Mammary epithelial cell (primary cell): ENCODE measurements at regions of chr5 and their contacts with region 1.

Region 1: GRCh38 chr5:178279725-178280438 is 47.3 kb upstream of the PHYKPL start:
- DNase-seq: peak; percentile 51
- H3K4me3 ChIP-seq: no peak overlapping the region
- H3K27ac ChIP-seq: no peak overlapping the region
- H3K4me1 ChIP-seq: no peaks in the 10 kb centered on the region
- H3K27me3 ChIP-seq: no peaks in the 10 kb centered on the region
- CTCF ChIP-seq: peak; percentile 73 to 90

Region 2: GRCh38 chr5:178113199-178113787 is 166.6 kb before region 1 on chr5 and contains the start of gene N4BP3:
- CTCF ChIA-PET with region 1: no interaction called
- dilution Hi-C with region 1: no loop called
- in situ Hi-C with region 1: no loop called
- intact Hi-C with region 1: no loop called
- DNase-seq: peak; percentile 82
- H3K4me3 ChIP-seq: peak within 1 kb of the TSS; percentile 47 to 74 (median 66)
- H3K27ac ChIP-seq: no peak within 1 kb of the TSS
- H3K4me1 ChIP-seq: peaks cover 24% of the 10 kb centered on the region
- H3K27me3 ChIP-seq: no peaks in the 10 kb centered on the region
- CTCF ChIP-seq: no peak
- total RNA-seq, gene N4BP3: 0.67 to 2.2 TPM

Region 3: DNA sequence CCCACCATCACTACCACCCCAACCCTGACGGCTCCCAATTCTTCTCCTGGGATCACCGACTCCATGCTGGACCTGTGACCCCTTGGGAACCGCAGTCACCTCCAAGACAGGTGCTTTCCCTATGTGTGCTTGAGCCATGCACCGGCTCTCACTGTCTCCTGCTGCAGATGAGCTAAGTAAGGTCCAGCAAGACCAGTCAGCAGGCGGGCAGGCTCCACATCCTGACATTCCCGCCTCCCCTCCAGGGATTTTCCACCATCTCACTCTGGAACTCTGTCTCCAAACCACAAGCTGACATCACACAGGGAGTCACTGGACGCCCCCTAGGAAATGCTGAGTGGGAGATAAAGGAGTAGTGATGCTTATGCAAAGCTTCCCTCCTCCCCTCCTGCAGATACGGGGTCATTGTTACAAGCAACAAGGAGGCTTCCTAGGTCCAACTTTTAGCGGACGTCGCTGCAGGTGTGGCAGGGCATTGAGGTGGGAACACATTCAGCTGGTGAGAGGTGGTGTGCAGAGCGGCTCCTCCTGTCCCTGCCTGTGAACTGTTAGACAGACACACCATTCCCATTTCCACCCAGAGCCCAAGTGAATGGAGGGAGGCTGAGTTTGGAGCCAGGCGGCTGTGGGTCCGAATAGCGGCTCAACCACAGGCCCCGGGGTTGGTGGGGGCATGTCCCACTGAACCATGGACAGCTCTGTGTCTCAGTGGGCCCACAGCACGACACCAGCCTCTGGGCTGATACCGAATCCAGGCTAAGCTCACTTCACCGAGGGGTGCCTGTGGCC is 82.0 kb after region 1 on chr5:
- CTCF ChIA-PET with region 1: no interaction called
- dilution Hi-C with region 1: loop called (anchors 5 kb)
- in situ Hi-C with region 1: no loop called
- intact Hi-C with region 1: no loop called
- DNase-seq: no peak
- H3K4me3 ChIP-seq: no peak overlapping the region
- H3K27ac ChIP-seq: no peak overlapping the region
- H3K4me1 ChIP-seq: no peaks in the 10 kb centered on the region
- H3K27me3 ChIP-seq: no peaks in the 10 kb centered on the region
- CTCF ChIP-seq: no peak

Region 4: GRCh38 chr5:178590141-178590923 is 310.4 kb after region 1 on chr5 and contains the start of gene COL23A1:
- CTCF ChIA-PET with region 1: no interaction called
- dilution Hi-C with region 1: no loop called
- in situ Hi-C with region 1: loop called in 1 of 2 experiments (anchors 25 kb)
- intact Hi-C with region 1: loop called (anchors 1 kb)
- DNase-seq: peak; percentile 33
- H3K4me3 ChIP-seq: peak within 1 kb of the TSS; percentile 37 to 60 (median 49)
- H3K27ac ChIP-seq: no peak within 1 kb of the TSS
- H3K4me1 ChIP-seq: peaks cover 25% of the 10 kb centered on the region
- H3K27me3 ChIP-seq: no peaks in the 10 kb centered on the region
- CTCF ChIP-seq: peak; percentile 43 to 77
- total RNA-seq, gene COL23A1: 0.33 to 0.54 TPM

Region 5: GRCh38 chr5:178838695-178839685 is 559.1 kb after region 1 on chr5:
- CTCF ChIA-PET with region 1: no interaction called
- dilution Hi-C with region 1: no loop called
- in situ Hi-C with region 1: no loop called
- intact Hi-C with region 1: loop called (anchors 1 kb)
- DNase-seq: peak; percentile 46
- H3K4me3 ChIP-seq: no peak overlapping the region
- H3K27ac ChIP-seq: no peak overlapping the region
- H3K4me1 ChIP-seq: no peaks in the 10 kb centered on the region
- H3K27me3 ChIP-seq: no peaks in the 10 kb centered on the region
- CTCF ChIP-seq: peak; percentile 42 to 80

Region 6: DNA sequence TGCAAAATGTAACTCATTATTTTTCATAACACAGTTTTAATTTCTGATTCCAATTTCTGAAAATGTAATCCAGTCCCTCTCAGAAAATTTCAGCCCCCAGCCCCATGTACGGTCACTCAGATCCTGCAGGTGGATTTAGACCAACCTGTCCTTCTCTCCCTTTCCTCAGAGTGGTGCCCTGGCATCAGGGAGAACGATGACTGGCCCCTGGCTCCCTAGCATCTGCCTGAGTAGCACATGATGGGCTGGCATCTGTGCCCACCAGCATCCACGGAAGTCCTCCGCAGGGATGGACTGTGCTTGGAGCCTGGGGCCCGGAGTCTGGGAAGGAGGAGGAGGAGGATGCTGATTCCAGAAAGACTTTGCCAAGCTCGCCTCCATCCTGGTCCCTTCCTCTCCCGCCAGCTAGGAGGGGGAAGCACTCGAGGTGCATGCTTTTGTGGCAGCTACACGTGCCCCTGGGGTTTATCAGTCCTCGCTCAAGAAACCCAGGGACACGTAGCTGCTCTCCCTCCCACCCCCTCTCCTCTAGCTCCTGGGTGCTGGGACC is 1216.1 kb after region 1 on chr5:
- CTCF ChIA-PET with region 1: no interaction called
- dilution Hi-C with region 1: no loop called
- in situ Hi-C with region 1: loop called (anchors 10 to 25 kb)
- intact Hi-C with region 1: loop called (anchors 1 kb)
- DNase-seq: no peak
- H3K4me3 ChIP-seq: no peak overlapping the region
- H3K27ac ChIP-seq: no peak overlapping the region
- H3K4me1 ChIP-seq: no peaks in the 10 kb centered on the region
- H3K27me3 ChIP-seq: no peaks in the 10 kb centered on the region
- CTCF ChIP-seq: peak in 1 of 2 donors; percentile 26